ENCODE measurements at regions of chr12 and their contacts with region 1.

Region 1: DNA sequence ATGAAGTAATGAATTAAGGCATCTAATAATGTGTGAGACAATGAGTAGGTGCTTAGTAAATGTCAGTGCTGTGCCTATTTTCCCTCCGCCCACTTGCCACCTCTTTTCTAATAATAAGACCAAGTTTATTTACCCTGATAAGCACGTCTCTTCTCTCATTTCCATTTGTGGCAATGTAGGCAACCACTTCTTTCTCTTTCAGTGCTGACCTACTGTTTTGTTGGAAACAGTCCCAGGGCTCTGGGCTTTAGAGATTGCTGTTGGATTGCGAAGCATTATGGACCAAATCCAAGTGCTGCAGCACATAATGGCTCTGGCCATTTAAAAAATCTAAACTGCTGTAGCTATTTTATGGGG is 141.3 kb upstream of the PLEKHG7 start:
- DNase-seq: peak in 1 of 3 donors; percentile 66
- ATAC-seq: peak; percentile 40
- H3K4me3 ChIP-seq: no peak overlapping the region
- H3K4me1 ChIP-seq: peaks cover 4% of the 10 kb centered on the region
- CTCF ChIP-seq: no peak

Region 2: GRCh38 chr12:91577586-91578539 is 983.7 kb before region 1 on chr12:
- intact Hi-C with region 1: loop called in 1 of 2 experiments (anchors 10 kb)
- DNase-seq: no peak
- ATAC-seq: peak; percentile 62
- H3K4me3 ChIP-seq: no peak overlapping the region
- H3K4me1 ChIP-seq: no peaks in the 10 kb centered on the region
- CTCF ChIP-seq: peak; percentile 30

Region 3: DNA sequence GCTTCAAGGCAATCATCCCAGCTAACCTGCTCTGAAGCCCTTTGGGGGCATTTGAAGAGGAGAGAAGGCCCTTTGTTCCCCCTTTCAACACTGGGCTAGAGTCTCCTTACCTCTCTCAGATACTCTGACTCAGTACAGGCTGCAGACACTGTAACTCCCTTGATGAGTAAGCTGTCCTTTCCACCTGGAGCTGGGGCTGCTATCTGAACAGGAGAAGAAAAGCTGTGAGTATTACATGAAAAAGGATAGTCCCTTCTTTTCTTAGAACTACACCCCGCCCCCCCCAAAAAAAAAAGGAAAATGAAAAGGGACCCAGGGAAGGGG is 45.3 kb before region 1 on chr12:
- intact Hi-C with region 1: no loop called
- DNase-seq: no peak
- ATAC-seq: peak; percentile 58
- H3K4me3 ChIP-seq: no peak overlapping the region
- H3K4me1 ChIP-seq: no peaks in the 10 kb centered on the region
- CTCF ChIP-seq: no peak

Measured in mucosa of descending colon (tissue), 3 donors.